Right ventricle myocardium inferior (tissue), 1 donor: ENCODE measurements at regions of chr22 and their contacts with region 1.

Region 1: GRCh38 chr22:46684706-46685105 is 53.3 kb downstream of the CERK start:
- DNase-seq: no peak
- ATAC-seq: peak; percentile 65

Region 2: GRCh38 chr22:46563381-46564083 is 121.2 kb before region 1 on chr22:
- intact Hi-C with region 1: loop called (anchors 5 kb)
- DNase-seq: peak; percentile 91
- ATAC-seq: peak; percentile 92

Region 3: GRCh38 chr22:46576556-46577367 is 107.9 kb before region 1 on chr22:
- intact Hi-C with region 1: loop called (anchors 5 kb)
- DNase-seq: peak; percentile 85
- ATAC-seq: peak; percentile 29

Region 4: GRCh38 chr22:46619830-46620501 is 64.7 kb before region 1 on chr22 and contains the start of gene GRAMD4:
- intact Hi-C with region 1: loop called (anchors 2 kb)
- DNase-seq: peak; percentile 83
- ATAC-seq: peak; percentile 67
- total RNA-seq, gene GRAMD4: 80.0 TPM

Region 5: DNA sequence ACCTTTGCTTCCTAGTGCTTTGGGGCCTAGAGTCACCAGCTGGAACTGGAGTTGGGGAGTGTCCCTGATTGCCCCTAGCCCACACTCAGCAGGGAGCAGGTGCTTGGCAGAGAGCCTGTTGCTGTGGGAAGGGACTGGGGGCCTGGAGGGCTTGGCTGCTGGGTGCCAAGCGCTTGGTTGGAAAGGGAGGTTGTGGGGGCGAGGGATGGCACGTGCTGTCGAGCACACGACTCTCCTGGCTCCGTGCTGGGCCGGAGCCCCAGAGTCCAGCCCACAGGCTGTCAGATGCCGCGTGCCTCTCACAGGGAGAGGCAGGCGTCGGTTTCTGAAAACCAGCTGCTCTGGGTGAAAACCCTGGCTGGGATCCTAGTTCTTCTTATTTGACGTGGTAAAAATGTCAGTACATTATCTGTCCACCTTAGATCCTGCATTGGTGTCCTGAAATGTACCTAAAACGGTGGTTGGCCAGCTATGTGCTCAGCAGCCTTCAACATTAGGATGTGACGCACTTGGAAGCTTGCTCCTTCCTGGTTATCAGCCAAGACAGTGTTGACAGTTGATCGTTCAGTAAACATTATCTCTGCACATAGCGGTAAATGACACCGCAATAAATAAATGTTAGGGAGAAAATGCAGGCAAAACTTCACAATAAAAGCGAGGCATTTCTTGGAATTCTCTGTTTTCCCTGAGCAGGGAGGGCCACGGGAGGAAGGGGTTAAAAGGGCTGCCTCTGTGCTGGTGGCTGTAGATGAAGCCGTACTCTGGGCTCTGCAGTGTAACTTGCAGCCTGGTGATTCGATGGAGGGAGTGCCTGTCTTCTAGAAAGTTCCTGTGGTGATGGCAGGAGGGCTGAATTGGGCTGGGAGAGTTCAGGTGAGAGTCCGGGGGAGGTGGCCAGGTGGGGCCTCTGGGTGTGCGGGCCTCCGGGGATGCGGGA is 35.3 kb before region 1 on chr22:
- intact Hi-C with region 1: loop called (anchors 5 kb)
- DNase-seq: no peak
- ATAC-seq: peak; percentile 67

Region 6: GRCh38 chr22:46661221-46661851 is 23.4 kb before region 1 on chr22:
- intact Hi-C with region 1: no loop called
- DNase-seq: no peak
- ATAC-seq: no peak

Region 7: GRCh38 chr22:46731246-46732040 is 46.7 kb after region 1 on chr22:
- intact Hi-C with region 1: loop called (anchors 2 kb)
- DNase-seq: peak; percentile 71
- ATAC-seq: peak; percentile 73

Region 8: GRCh38 chr22:46737976-46738646 is 53.4 kb after region 1 on chr22 and contains the start of gene CERK:
- intact Hi-C with region 1: loop called (anchors 2 kb)
- DNase-seq: peak; percentile 87
- ATAC-seq: peak; percentile 82
- total RNA-seq, gene CERK: 71.6 TPM